ENCODE measurements at regions of chr1 and their contacts with region 1.

Region 1: DNA sequence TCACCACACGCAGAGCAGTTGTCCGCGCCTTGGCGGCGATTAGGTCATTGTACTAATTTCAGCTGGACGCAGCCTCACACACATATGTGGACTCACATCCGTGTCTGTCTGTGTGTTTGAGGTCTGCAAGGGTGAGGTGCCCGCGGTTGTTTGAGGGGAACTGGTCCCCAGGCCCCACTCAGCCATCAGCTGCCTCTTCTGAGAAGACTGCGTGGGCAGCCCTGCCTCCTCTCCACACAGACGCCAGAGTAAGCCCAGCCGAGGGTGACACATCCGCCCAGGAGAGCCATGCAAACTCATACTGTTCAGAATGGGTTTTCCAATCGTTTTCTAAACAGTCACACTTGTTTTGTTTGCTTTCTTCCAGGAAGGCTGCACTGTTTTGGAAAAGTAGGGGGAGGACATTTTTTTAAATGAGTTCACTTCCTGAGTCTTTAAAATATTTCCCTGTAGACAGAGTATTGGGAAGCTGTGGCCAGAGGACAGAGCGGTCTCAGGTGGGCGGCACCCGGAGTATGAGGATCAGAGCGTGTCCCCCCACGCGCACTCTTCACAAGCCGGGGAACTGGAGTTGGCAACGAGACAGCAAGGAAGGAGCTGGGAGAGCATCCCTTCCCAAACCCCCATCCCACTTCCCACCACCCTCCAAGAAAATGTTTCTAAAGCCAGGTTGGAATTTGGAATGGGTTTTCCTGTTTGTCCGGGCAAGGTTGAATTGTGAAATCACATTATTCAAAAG is 53.3 kb downstream of the TOMM20 start:
- DNase-seq: no peak

Region 2: GRCh38 chr1:234500269-234500668 is 575.1 kb before region 1 on chr1:
- in situ Hi-C with region 1: loop called (anchors 10 kb)
- DNase-seq: no peak

Region 3: GRCh38 chr1:234997201-234997895 is 78.0 kb before region 1 on chr1:
- in situ Hi-C with region 1: no loop called
- DNase-seq: peak; percentile 98

Measured in G401 (cell line).